Posterior vena cava (tissue), 2 donors: ENCODE measurements at regions of chr19 and their contacts with region 1.

Region 1: DNA sequence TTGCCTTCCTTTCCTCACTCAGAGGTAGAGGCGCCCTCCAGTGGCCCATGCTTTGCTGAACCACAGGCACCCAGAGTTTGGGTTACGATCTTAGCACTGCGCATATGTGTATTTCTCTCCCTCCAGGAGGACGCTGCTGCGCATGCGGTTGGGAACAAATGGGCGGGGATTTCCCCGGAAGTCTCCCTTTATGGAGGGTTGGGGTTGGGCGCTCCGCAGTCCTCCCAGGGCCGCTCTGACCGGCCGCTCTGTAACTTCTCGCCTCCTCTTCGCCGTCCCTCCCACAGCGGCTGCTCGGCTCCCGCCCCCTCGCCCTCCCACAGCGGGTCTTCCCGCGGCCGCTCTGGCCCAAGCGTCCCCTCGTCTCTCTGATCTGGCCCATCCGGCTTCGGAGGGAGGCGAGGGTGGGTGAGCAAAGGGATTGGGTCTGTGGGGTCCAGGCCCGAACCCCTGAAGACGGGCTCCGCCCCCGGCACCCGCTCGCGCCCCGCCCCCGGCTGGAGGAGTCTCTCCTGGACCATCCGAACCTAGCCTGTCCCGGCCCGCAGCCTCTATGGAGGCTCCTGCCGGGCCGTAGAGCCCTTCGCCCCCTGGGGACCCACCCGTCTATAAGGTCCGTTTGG is at the start of gene MEGF8:
- DNase-seq: peak; percentile 99
- total RNA-seq, gene MEGF8: 16.8 to 20.4 TPM

Region 2: GRCh38 chr19:42121656-42122069 is 203.7 kb before region 1 on chr19:
- intact Hi-C with region 1: loop called in 1 of 2 experiments (anchors 10 kb)
- DNase-seq: peak; percentile 86

Region 3: DNA sequence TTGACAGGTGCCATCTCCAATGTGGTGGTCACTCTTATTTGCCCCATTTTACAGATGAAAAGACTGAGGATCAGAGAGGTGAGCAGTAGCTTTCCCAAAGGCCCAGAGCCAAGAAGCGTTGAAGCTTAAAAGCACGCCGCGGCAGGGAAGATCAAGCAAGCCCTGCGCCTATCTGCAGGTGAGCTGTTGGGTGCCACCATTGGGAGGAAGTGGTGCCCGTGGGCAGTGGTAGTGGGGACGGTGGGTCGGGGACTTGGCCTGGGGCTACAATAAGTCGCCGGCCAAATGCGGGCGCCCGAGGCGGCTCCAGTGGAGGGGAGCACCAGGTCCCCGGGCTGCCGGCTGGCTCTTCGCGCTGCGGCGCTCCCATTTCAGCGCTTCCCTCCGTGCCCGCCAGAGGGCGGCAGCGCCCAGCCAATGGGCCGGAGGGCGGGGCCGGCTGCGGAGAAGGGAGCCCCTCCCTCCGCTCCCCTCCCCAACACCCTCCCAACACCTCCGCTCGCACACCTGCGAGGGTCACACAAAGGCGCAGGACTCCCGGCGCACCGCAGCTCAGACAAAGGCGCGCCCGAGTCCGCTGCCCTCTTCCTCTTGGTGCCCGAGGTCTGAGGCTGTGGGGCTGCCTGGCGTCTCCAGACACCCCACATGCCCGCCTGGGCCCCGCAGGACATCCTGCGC is 192.4 kb before region 1 on chr19:
- intact Hi-C with region 1: loop called (anchors 10 kb)
- DNase-seq: peak; percentile 91

Region 4: GRCh38 chr19:42343344-42344110 is 18.1 kb after region 1 on chr19:
- intact Hi-C with region 1: no loop called
- DNase-seq: no peak